Naive thymus-derived CD4-positive, alpha-beta T cell (primary cell): ENCODE measurements at regions of chr1 and their contacts with region 1.

Region 1: DNA sequence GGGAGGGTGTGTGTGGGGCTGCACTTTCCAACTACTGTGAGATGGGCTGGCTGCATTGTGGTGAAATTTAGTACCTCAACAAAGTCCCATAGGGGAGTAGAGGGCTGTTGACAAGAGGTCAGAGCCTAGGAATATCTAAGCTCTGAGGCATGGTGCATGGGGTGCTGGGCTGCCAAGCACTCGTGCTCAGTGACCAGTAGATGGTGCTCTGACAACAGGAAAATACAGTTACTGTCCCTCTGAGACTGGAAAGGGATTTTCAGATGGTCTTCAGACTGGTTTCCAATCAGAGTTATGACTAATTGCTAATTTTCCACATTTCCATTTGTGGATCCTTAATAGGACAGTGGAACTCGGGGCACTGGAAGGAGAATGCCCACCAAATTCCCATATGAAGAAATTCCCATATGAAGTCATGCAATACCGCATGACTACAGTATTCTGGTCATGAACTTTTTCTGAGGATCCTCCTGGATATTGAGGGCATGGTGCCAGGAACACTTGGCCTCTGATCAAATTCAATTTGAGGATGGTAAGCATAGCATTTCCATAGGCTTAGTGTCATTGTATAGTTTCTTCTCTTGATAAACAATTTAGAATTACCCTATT is 4.1 kb upstream of the CACNA1E start:
- DNase-seq: peak in 5 of 9 donors; percentile 25 to 40 (median 26)
- ATAC-seq: peak; percentile 64
- H3K4me3 ChIP-seq: no peak overlapping the region
- H3K4me3 Mint-ChIP-seq: no peak overlapping the region
- H3K27ac ChIP-seq: no peak overlapping the region
- H3K27ac Mint-ChIP-seq: no peak overlapping the region
- H3K4me1 ChIP-seq: no peaks in the 10 kb centered on the region
- H3K4me1 Mint-ChIP-seq: peaks cover 9 to 16% (median 12%) of the 10 kb centered on the region in 7 donors
- H3K27me3 ChIP-seq: peaks cover 0 to 5% of the 10 kb centered on the region in 2 donors
- H3K27me3 Mint-ChIP-seq: peaks cover 34 to 58% (median 46%) of the 10 kb centered on the region in 5 donors

Region 2: GRCh38 chr1:181366910-181367309 is 112.3 kb before region 1 on chr1:
- CTCF ChIA-PET with region 1: no interaction called
- POLR2A ChIA-PET with region 1: no interaction called
- intact Hi-C with region 1: no loop called
- DNase-seq: no peak
- ATAC-seq: no peak
- H3K4me3 ChIP-seq: no peak overlapping the region
- H3K4me3 Mint-ChIP-seq: peak overlapping the region in 1 of 10 donors; percentile 5
- H3K27ac ChIP-seq: no peak overlapping the region
- H3K27ac Mint-ChIP-seq: no peak overlapping the region
- H3K4me1 ChIP-seq: no peaks in the 10 kb centered on the region
- H3K4me1 Mint-ChIP-seq: peaks cover 0 to 19% (median 0%) of the 10 kb centered on the region in 7 donors
- H3K27me3 ChIP-seq: no peaks in the 10 kb centered on the region
- H3K27me3 Mint-ChIP-seq: no peaks in the 10 kb centered on the region

Region 3: DNA sequence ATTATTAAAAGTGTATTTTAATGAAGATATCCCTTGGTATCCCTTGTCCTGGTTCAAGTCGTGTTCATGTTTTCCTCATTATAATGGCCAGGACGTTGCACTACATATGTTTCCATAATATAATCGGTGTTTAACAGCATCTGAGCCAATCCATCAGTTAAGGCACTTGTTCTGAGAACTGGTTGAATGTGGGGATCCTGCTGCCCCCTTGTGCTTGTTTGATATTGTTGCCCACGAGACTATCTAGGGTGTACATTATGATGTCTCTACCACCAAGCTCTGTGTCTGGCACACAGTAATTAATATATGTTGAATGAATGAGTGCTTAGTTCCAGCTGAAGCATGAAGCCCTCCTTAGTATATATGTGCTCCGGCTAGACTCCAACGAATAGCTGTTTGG is 197.0 kb after region 1 on chr1:
- CTCF ChIA-PET with region 1: no interaction called
- POLR2A ChIA-PET with region 1: no interaction called
- intact Hi-C with region 1: loop called in 1 of 2 experiments (anchors 1 kb)
- DNase-seq: no peak
- ATAC-seq: no peak
- H3K4me3 ChIP-seq: no peak overlapping the region
- H3K4me3 Mint-ChIP-seq: no peak overlapping the region
- H3K27ac ChIP-seq: no peak overlapping the region
- H3K27ac Mint-ChIP-seq: no peak overlapping the region
- H3K4me1 ChIP-seq: no peaks in the 10 kb centered on the region
- H3K4me1 Mint-ChIP-seq: no peaks in the 10 kb centered on the region
- H3K27me3 ChIP-seq: no peaks in the 10 kb centered on the region
- H3K27me3 Mint-ChIP-seq: peaks cover 17 to 56% (median 49%) of the 10 kb centered on the region in 5 donors

Region 4: GRCh38 chr1:181936768-181937581 is 457.7 kb after region 1 on chr1:
- CTCF ChIA-PET with region 1: interaction called, 4 read pairs
- POLR2A ChIA-PET with region 1: no interaction called
- intact Hi-C with region 1: loop called in 1 of 2 experiments (anchors 2 kb)
- DNase-seq: peak in 8 of 9 donors; percentile 13 to 50 (median 26)
- ATAC-seq: peak; percentile 69
- H3K4me3 ChIP-seq: no peak overlapping the region
- H3K4me3 Mint-ChIP-seq: peak overlapping the region in 5 of 10 donors; percentile 33 to 69 (median 40)
- H3K27ac ChIP-seq: no peak overlapping the region
- H3K27ac Mint-ChIP-seq: no peak overlapping the region
- H3K4me1 ChIP-seq: no peaks in the 10 kb centered on the region
- H3K4me1 Mint-ChIP-seq: peaks cover 0 to 5% (median 0%) of the 10 kb centered on the region in 7 donors
- H3K27me3 ChIP-seq: no peaks in the 10 kb centered on the region
- H3K27me3 Mint-ChIP-seq: peaks cover 0 to 5% (median 0%) of the 10 kb centered on the region in 5 donors

Region 5: DNA sequence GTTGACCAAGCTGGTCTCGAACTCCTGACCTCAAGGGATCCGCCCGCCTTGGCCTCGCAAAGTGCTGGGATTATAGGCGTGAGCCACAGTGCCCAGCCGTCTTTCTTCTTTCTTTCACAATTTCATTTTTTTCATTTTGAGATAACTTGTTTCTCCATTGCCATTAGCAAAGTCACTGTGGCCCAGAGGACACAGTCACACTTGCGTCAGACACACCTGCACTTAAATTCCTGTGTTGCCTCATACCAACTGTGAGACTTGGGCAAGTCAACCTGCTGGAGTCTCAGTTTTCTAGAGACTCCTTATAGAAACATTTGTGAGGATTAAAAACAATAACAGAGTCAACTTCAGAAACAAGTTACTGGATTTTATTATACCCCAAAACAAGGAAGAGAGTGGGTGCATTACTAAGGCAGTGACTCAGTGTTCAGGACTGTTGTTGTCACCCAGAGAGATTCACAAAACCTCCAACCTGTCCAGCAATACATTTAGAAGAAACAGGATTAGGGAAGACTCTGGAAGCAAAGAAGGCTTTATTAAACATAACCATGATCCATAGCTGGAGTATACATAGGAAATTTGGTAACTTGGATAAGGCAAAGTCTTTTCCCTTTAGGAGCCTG is 918.6 kb after region 1 on chr1:
- CTCF ChIA-PET with region 1: interaction called, 3 read pairs
- POLR2A ChIA-PET with region 1: no interaction called
- intact Hi-C with region 1: loop called (anchors 1 to 10 kb)
- DNase-seq: no peak
- ATAC-seq: no peak
- H3K4me3 ChIP-seq: no peak overlapping the region
- H3K4me3 Mint-ChIP-seq: no peak overlapping the region
- H3K27ac ChIP-seq: no peak overlapping the region
- H3K27ac Mint-ChIP-seq: no peak overlapping the region
- H3K4me1 ChIP-seq: no peaks in the 10 kb centered on the region
- H3K4me1 Mint-ChIP-seq: peaks cover 5 to 11% (median 6%) of the 10 kb centered on the region in 7 donors
- H3K27me3 ChIP-seq: no peaks in the 10 kb centered on the region
- H3K27me3 Mint-ChIP-seq: peaks cover 0 to 28% (median 0%) of the 10 kb centered on the region in 5 donors